ENCODE measurements at regions of chr5 and their contacts with region 1.

Region 1: GRCh38 chr5:172860520-172861443 is 26.7 kb downstream of the ERGIC1 start:
- DNase-seq: no peak
- H3K4me3 ChIP-seq: no peak overlapping the region
- H3K4me3 Mint-ChIP-seq: peak overlapping the region; percentile 67
- H3K27ac Mint-ChIP-seq: peak overlapping the region; percentile 97
- H3K4me1 ChIP-seq: peaks cover 74% of the 10 kb centered on the region
- H3K4me1 Mint-ChIP-seq: peaks cover 67% of the 10 kb centered on the region
- H3K27me3 ChIP-seq: no peaks in the 10 kb centered on the region
- H3K27me3 Mint-ChIP-seq: no peaks in the 10 kb centered on the region
- CTCF ChIP-seq: no peak

Region 2: GRCh38 chr5:172714491-172715421 is 146.0 kb before region 1 on chr5:
- CTCF ChIA-PET with region 1: interaction called, 7 read pairs
- POLR2A ChIA-PET with region 1: interaction called, 3 read pairs
- intact Hi-C with region 1: loop called (anchors 5 kb)
- DNase-seq: peak; percentile 79 to 80
- H3K4me3 ChIP-seq: no peak overlapping the region
- H3K4me3 Mint-ChIP-seq: no peak overlapping the region
- H3K27ac Mint-ChIP-seq: no peak overlapping the region
- H3K4me1 ChIP-seq: peaks cover 23% of the 10 kb centered on the region
- H3K4me1 Mint-ChIP-seq: peaks cover 6% of the 10 kb centered on the region
- H3K27me3 ChIP-seq: no peaks in the 10 kb centered on the region
- H3K27me3 Mint-ChIP-seq: no peaks in the 10 kb centered on the region
- CTCF ChIP-seq: peak; percentile 84 to 85

Region 3: GRCh38 chr5:172764849-172765765 is 95.7 kb before region 1 on chr5:
- CTCF ChIA-PET with region 1: interaction called, 40 read pairs
- POLR2A ChIA-PET with region 1: interaction called, 94 read pairs
- intact Hi-C with region 1: loop called (anchors 1 kb)
- DNase-seq: peak; percentile 97 to 98
- H3K4me3 ChIP-seq: peak overlapping the region; percentile 31
- H3K4me3 Mint-ChIP-seq: peak overlapping the region; percentile 76
- H3K27ac Mint-ChIP-seq: peak overlapping the region; percentile 96
- H3K4me1 ChIP-seq: peaks cover 24% of the 10 kb centered on the region
- H3K4me1 Mint-ChIP-seq: peaks cover 28% of the 10 kb centered on the region
- H3K27me3 ChIP-seq: no peaks in the 10 kb centered on the region
- H3K27me3 Mint-ChIP-seq: no peaks in the 10 kb centered on the region
- CTCF ChIP-seq: no peak

Region 4: DNA sequence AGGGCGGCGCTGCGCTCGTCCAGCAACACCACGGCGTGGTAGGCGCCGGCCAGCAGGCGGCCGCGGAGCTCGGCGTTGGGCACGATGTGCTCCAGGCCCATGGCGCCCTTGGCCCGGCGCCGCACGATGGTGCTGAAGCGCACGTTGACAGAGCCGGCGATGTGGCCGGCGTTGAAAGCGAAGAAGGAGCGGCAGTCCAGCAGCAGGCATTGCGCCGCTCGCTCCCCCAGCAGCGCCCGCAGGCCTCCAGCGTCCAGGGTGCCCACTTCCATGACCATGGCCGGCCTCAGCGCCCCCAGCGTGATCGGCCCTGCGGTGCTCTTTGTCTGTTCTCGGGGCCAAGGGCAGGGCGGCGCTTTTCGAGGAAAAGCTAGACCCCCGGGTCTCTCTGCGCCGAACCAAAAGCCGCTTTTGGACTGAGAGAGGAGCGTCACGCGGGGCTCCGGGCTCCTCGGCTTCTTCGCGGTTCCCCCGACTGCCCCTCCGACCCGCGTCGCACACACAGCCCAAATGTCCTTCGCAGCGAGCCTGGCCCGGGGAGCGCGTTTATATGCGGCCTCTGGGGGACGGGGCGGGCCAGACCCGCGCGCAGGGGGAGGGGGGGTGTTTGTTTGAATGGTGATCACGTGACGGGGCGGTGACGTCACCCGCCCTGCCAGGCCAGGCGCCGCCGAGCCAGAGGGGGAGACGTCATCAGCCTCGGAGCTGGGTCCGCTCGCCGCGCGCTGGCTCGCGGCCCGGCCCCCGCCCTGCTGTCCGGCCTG is 89.9 kb before region 1 on chr5 and contains the start of gene DUSP1:
- CTCF ChIA-PET with region 1: interaction called, 40 read pairs
- POLR2A ChIA-PET with region 1: interaction called, 94 read pairs
- intact Hi-C with region 1: loop called (anchors 1 kb)
- DNase-seq: peak; percentile 98
- H3K4me3 ChIP-seq: peak within 1 kb of the TSS; percentile 96
- H3K4me3 Mint-ChIP-seq: peak within 1 kb of the TSS; percentile 89
- H3K27ac Mint-ChIP-seq: peak within 1 kb of the TSS; percentile 96
- H3K4me1 ChIP-seq: peaks cover 48% of the 10 kb centered on the region
- H3K4me1 Mint-ChIP-seq: peaks cover 35% of the 10 kb centered on the region
- H3K27me3 ChIP-seq: no peaks in the 10 kb centered on the region
- H3K27me3 Mint-ChIP-seq: no peaks in the 10 kb centered on the region
- CTCF ChIP-seq: peak; percentile 47 to 53
- total RNA-seq, gene DUSP1: 28.3 and 29.2 TPM in 2 replicates

Region 5: GRCh38 chr5:172833686-172834414 is 26.9 kb before region 1 on chr5 and contains the start of gene ERGIC1:
- CTCF ChIA-PET with region 1: no interaction called
- POLR2A ChIA-PET with region 1: interaction called, 11 read pairs
- intact Hi-C with region 1: loop called (anchors 1 kb)
- DNase-seq: peak; percentile 88 to 90
- H3K4me3 ChIP-seq: peak within 1 kb of the TSS; percentile 86
- H3K4me3 Mint-ChIP-seq: peak within 1 kb of the TSS; percentile 88
- H3K27ac Mint-ChIP-seq: peak within 1 kb of the TSS; percentile 88
- H3K4me1 ChIP-seq: peaks cover 25% of the 10 kb centered on the region
- H3K4me1 Mint-ChIP-seq: peaks cover 21% of the 10 kb centered on the region
- H3K27me3 ChIP-seq: no peaks in the 10 kb centered on the region
- H3K27me3 Mint-ChIP-seq: no peaks in the 10 kb centered on the region
- CTCF ChIP-seq: no peak
- total RNA-seq, gene ERGIC1: 152 and 161 TPM in 2 replicates

Region 6: DNA sequence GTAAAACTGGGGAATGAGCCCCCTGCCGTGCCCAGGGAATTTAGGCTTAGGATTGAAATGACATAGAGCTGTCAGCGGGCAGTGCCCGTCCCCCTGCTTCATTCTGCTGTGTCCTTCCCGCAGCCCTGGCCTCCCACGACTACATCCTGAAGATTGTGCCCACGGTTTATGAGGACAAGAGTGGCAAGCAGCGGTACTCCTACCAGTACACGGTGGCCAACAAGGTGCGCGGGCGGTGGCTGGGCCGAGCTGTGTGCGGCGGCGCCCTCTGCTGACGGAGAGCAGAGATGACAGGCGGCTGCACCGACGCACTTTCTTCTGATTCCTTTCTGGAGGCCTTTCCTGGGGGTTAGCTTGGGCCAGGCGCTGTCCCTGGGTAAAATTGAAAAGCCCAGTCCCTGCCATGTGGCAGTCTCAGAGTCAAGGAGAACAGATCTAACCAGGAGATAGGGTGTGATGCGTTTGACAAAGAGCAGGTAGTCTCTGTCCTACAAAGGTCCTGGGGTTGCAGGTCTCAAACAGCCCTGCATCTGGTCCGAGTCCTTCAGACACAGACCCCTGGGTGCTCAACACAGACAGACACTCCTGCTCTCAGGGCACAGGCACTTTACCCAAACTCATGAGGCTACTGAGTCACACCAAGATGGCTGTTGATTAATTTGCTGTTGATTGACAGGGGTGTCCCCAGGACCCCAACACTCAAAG is 71.7 kb after region 1 on chr5:
- CTCF ChIA-PET with region 1: interaction called, 11 read pairs
- POLR2A ChIA-PET with region 1: no interaction called
- intact Hi-C with region 1: no loop called
- DNase-seq: peak; percentile 58 to 67
- H3K4me3 ChIP-seq: no peak overlapping the region
- H3K4me3 Mint-ChIP-seq: no peak overlapping the region
- H3K27ac Mint-ChIP-seq: no peak overlapping the region
- H3K4me1 ChIP-seq: no peaks in the 10 kb centered on the region
- H3K4me1 Mint-ChIP-seq: no peaks in the 10 kb centered on the region
- H3K27me3 ChIP-seq: no peaks in the 10 kb centered on the region
- H3K27me3 Mint-ChIP-seq: no peaks in the 10 kb centered on the region
- CTCF ChIP-seq: peak; percentile 77 to 92

Region 7: GRCh38 chr5:172953776-172954675 is 93.2 kb after region 1 on chr5:
- CTCF ChIA-PET with region 1: no interaction called
- POLR2A ChIA-PET with region 1: no interaction called
- intact Hi-C with region 1: no loop called
- DNase-seq: no peak
- H3K4me3 ChIP-seq: no peak overlapping the region
- H3K4me3 Mint-ChIP-seq: no peak overlapping the region
- H3K27ac Mint-ChIP-seq: peak overlapping the region; percentile 62
- H3K4me1 ChIP-seq: peaks cover 25% of the 10 kb centered on the region
- H3K4me1 Mint-ChIP-seq: peaks cover 23% of the 10 kb centered on the region
- H3K27me3 ChIP-seq: no peaks in the 10 kb centered on the region
- H3K27me3 Mint-ChIP-seq: no peaks in the 10 kb centered on the region
- CTCF ChIP-seq: no peak